GM12878 (cell line): ENCODE measurements at regions of chr5 and their contacts with region 1.

Region 1: DNA sequence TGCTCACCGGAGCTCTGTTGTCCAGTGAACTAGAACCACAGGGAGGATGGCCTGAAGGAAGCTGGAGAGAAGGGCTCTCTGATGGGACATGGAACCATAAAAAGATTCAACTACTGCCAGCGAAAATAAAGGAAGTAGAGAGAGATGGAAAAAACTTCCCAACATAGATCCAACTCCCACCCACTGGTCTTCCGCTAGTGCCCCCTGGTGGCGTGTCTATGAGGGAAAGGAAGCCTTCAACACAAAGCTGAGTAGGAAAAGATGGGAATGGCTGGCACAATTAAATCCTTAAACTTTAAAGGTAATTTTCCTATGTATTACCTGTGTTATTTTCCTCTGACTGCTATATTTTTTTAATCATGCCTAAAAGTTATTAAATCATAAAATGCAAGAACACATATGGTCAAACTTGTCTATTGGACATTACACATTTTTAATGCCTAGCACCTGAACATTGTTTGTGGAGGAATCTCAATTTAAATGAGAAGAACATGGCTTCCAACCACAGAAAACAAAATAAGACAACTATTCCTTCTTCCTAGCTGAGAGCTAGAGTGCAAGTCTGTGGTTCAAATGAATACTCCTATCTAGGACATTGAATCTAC is 51.5 kb downstream of the CEP120 start:
- DNase-seq: no peak
- ATAC-seq: no peak
- H3K4me3 ChIP-seq: no peak overlapping the region
- H3K27ac ChIP-seq: no peak overlapping the region
- H3K4me1 ChIP-seq: no peaks in the 10 kb centered on the region
- H3K27me3 ChIP-seq: no peaks in the 10 kb centered on the region
- CTCF ChIP-seq: peak; percentile 26 to 40 (median 40); a peak in 4 of 6 replicates
- EP300 ChIP-seq: no peak
- POLR2A ChIP-seq: no peak
- RAD21 ChIP-seq: 0 out of 2 replicates have a peak, but pooled peaks have one; percentile 4

Region 2: DNA sequence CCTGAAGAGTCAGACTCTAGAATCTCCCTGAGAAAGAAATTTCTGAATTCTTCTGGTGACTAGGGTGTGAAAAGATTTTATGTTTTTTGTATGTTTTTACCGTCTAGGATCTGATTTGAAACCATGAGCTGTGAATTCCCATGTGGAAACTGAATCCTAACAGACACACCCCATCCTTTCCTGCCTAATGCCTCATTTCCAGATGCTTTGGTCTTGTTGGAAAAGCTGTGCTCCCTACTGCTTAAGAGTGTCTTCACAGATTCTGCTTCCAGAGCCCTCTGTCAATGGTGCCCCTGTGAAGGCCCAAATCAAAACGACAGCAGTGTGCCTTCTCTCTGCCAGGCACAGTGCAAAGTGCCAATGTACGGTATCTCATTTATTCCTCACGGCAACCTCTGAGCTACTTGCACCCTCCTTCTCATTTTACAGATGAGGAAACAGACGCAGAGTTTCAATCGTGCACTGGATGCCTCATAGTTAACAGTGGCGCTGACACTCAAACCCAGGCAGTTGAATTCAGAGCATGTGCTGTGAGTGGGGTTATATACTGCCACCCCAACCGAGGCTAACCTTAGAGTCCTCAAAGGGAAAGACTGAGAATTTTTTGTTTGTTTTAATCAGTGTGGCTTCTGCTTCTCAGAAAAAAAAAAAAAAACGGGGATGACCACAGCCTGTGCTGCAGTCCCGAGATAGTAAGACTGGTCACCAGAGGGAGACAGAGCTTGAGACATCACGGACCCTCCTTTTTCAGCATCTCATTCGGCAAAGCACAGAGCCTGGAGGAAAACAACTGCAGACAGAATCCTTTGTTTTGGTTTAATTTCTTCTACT is 871.2 kb before region 1 on chr5:
- CTCF ChIA-PET with region 1: no interaction called
- POLR2A ChIA-PET with region 1: no interaction called
- RAD21 ChIA-PET with region 1: no interaction called
- SMC1A ChIA-PET with region 1: no interaction called
- in situ Hi-C with region 1: loop called (anchors 10 kb)
- intact Hi-C with region 1: loop called (anchors 5 kb)
- DNase-seq: no peak
- ATAC-seq: peak; percentile 79
- H3K4me3 ChIP-seq: no peak overlapping the region
- H3K27ac ChIP-seq: no peak overlapping the region
- H3K4me1 ChIP-seq: no peaks in the 10 kb centered on the region
- H3K27me3 ChIP-seq: peaks cover 0 to 2% of the 10 kb centered on the region in 2 experiments; a peak in 1 of 4 replicates
- CTCF ChIP-seq: peak in 2 of 3 experiments; percentile 33 to 56; a peak in 4 of 6 replicates
- EP300 ChIP-seq: no peak
- POLR2A ChIP-seq: no peak
- RAD21 ChIP-seq: peak; percentile 73

Region 3: GRCh38 chr5:122515709-122516431 is 855.8 kb before region 1 on chr5:
- CTCF ChIA-PET with region 1: interaction called, 13 read pairs
- POLR2A ChIA-PET with region 1: no interaction called
- RAD21 ChIA-PET with region 1: no interaction called
- SMC1A ChIA-PET with region 1: interaction called, 3 read pairs
- in situ Hi-C with region 1: no loop called
- intact Hi-C with region 1: no loop called
- DNase-seq: no peak
- ATAC-seq: peak; percentile 88
- H3K4me3 ChIP-seq: no peak overlapping the region
- H3K27ac ChIP-seq: no peak overlapping the region
- H3K4me1 ChIP-seq: no peaks in the 10 kb centered on the region
- H3K27me3 ChIP-seq: no peaks in the 10 kb centered on the region
- CTCF ChIP-seq: peak; percentile 67 to 78 (median 74); a peak in 5 of 6 replicates
- EP300 ChIP-seq: no peak
- POLR2A ChIP-seq: no peak
- RAD21 ChIP-seq: peak; percentile 97

Region 4: DNA sequence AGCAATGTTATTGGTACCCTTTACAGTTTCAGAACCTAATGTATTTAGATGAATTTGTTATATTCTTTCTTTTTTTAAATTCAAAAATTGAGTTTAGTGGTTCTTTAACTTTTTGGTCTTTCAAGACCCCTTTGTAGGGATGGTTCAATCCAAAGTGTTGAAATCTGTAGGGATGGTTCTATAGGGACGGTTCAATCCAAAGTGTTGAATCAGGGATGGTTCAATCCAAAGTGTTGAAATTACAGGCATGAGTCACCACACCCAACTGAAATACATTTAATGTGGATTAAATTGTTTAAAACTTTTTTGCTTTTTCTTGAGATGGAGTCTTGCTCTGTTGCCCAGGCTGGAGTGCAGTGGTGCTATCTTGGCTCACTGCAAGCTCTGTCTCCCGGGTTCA is 566.2 kb before region 1 on chr5:
- CTCF ChIA-PET with region 1: no interaction called
- POLR2A ChIA-PET with region 1: no interaction called
- RAD21 ChIA-PET with region 1: no interaction called
- SMC1A ChIA-PET with region 1: no interaction called
- in situ Hi-C with region 1: no loop called
- intact Hi-C with region 1: no loop called
- DNase-seq: no peak
- ATAC-seq: no peak
- H3K4me3 ChIP-seq: no peak overlapping the region
- H3K27ac ChIP-seq: no peak overlapping the region
- H3K4me1 ChIP-seq: no peaks in the 10 kb centered on the region
- H3K27me3 ChIP-seq: no peaks in the 10 kb centered on the region
- CTCF ChIP-seq: no peak
- EP300 ChIP-seq: no peak
- POLR2A ChIP-seq: no peak
- RAD21 ChIP-seq: no peak

Region 5: DNA sequence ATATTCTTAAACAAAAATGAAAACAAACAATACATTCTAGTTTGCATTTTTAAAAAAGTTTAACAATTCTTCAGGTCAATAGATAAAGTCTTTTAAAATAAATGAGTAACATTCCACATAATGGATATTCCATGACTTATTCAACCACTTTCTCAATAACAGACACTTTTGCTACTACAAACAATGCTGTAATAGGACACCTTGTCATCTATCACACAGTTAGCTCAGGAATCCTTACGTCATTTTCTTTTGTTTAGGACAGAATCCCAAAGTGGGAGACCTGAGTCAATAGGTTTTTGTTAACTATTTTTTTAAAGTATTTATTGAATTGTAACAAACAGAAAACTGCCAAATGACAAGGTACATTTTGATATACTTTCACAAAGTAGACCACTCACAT is 20.9 kb before region 1 on chr5:
- CTCF ChIA-PET with region 1: interaction called, 12 read pairs
- POLR2A ChIA-PET with region 1: no interaction called
- RAD21 ChIA-PET with region 1: no interaction called
- SMC1A ChIA-PET with region 1: interaction called, 3 read pairs
- in situ Hi-C with region 1: no loop called
- intact Hi-C with region 1: no loop called
- DNase-seq: no peak
- ATAC-seq: no peak
- H3K4me3 ChIP-seq: no peak overlapping the region
- H3K27ac ChIP-seq: no peak overlapping the region
- H3K4me1 ChIP-seq: no peaks in the 10 kb centered on the region
- H3K27me3 ChIP-seq: no peaks in the 10 kb centered on the region
- CTCF ChIP-seq: no peak
- EP300 ChIP-seq: no peak
- POLR2A ChIP-seq: no peak
- RAD21 ChIP-seq: no peak

Region 6: GRCh38 chr5:123382252-123382651 is 10.6 kb after region 1 on chr5:
- CTCF ChIA-PET with region 1: interaction called, 10 read pairs
- POLR2A ChIA-PET with region 1: interaction called, 4 read pairs
- RAD21 ChIA-PET with region 1: no interaction called
- SMC1A ChIA-PET with region 1: interaction called, 6 read pairs
- in situ Hi-C with region 1: no loop called
- intact Hi-C with region 1: no loop called
- DNase-seq: no peak
- ATAC-seq: no peak
- H3K4me3 ChIP-seq: no peak overlapping the region
- H3K27ac ChIP-seq: no peak overlapping the region
- H3K4me1 ChIP-seq: no peaks in the 10 kb centered on the region
- H3K27me3 ChIP-seq: no peaks in the 10 kb centered on the region
- CTCF ChIP-seq: no peak
- EP300 ChIP-seq: no peak
- POLR2A ChIP-seq: no peak
- RAD21 ChIP-seq: no peak

Region 7: DNA sequence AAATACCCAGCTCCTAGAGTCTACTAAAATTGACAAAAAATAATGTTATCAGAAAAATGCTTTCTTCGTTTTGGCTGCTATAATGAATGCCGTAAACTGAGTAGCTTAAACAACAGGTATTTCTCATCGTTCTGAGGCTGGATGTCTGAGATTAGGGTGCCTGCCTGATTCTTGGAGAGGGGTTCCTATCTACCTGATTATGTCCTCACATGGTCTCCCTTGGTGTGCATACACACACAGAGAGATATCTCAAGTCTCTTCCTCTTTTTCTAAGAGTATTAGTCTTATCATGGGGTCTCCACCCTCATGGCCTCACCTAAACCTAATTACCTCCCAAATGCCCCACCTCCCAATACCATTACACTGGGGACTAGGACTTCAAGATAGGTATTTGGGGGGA is 99.7 kb after region 1 on chr5:
- CTCF ChIA-PET with region 1: no interaction called
- POLR2A ChIA-PET with region 1: no interaction called
- RAD21 ChIA-PET with region 1: no interaction called
- SMC1A ChIA-PET with region 1: no interaction called
- in situ Hi-C with region 1: no loop called
- intact Hi-C with region 1: no loop called
- DNase-seq: no peak
- ATAC-seq: no peak
- H3K4me3 ChIP-seq: no peak overlapping the region
- H3K27ac ChIP-seq: no peak overlapping the region
- H3K4me1 ChIP-seq: no peaks in the 10 kb centered on the region
- H3K27me3 ChIP-seq: no peaks in the 10 kb centered on the region; a peak in 1 of 4 replicates
- CTCF ChIP-seq: no peak
- EP300 ChIP-seq: no peak
- POLR2A ChIP-seq: no peak
- RAD21 ChIP-seq: no peak